PC-9 (cell line): ENCODE measurements at regions of chr11 and their contacts with region 1.

Region 1: GRCh38 chr11:55367674-55368073 is at the start of gene OR4A15:
- DNase-seq: no peak
- H3K4me3 ChIP-seq: no peak within 1 kb of the TSS
- H3K27ac ChIP-seq: no peak within 1 kb of the TSS
- H3K4me1 ChIP-seq: no peaks in the 10 kb centered on the region
- H3K27me3 ChIP-seq: no peaks in the 10 kb centered on the region
- CTCF ChIP-seq: no peak
- total RNA-seq, gene OR4A15: not detected in 2 replicates

Region 2: DNA sequence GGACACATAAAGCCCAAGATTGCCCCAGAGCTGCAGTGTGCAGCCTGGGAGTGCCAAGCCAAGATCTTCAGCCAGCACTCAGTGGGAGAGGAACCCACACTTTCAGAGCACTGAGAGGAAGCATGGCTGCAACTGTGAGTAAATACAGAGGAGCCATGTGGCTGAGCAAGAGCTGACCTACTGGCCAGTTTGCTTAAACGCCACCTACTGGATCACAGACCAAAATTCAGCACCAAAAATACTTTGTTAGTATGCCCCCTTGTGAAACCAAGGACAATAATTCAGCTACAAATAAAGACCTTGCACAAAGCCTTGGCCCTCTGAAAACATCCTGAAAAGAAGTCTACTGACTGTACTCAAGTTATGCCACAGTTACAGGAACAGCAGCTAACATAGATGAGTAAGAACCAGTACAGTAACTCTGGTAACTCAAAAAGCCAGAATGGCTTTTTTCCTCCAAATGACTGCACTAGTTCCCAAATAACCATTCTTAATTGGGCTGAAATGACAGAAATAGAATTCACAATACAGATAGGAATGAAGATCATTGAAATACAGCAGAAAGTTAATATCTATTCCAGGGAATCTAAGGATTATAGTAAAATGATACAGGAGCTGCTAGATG is 10.0 kb before region 1 on chr11:
- CTCF ChIA-PET with region 1: no interaction called
- POLR2A ChIA-PET with region 1: no interaction called
- intact Hi-C with region 1: loop called (anchors 1 kb)
- DNase-seq: no peak
- H3K4me3 ChIP-seq: no peak overlapping the region
- H3K27ac ChIP-seq: no peak overlapping the region
- H3K4me1 ChIP-seq: no peaks in the 10 kb centered on the region
- H3K27me3 ChIP-seq: no peaks in the 10 kb centered on the region
- CTCF ChIP-seq: peak; percentile 65

Region 3: DNA sequence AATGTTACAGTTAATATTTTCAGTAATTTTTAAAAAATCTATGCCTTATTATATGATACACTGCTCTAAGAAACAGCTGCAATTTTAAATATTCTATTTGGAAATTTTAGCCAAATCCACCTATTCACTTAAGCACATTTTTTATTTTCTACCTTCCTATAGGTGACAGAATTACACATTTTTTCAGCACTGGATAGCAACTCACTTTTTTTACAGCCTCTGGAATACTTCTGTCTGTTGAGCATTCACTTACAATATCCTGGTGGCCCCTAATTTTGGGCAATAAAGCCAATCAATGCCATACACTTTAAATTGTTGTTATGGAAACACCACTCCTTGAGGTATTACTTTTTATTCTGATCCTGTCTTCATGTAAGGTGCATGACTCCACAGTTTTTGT is 22.5 kb after region 1 on chr11:
- CTCF ChIA-PET with region 1: no interaction called
- POLR2A ChIA-PET with region 1: no interaction called
- intact Hi-C with region 1: no loop called
- DNase-seq: no peak
- H3K4me3 ChIP-seq: no peak overlapping the region
- H3K27ac ChIP-seq: no peak overlapping the region
- H3K4me1 ChIP-seq: no peaks in the 10 kb centered on the region
- H3K27me3 ChIP-seq: no peaks in the 10 kb centered on the region
- CTCF ChIP-seq: no peak